Activated CD4-positive, alpha-beta T cell treated with anti-CD3 and anti-CD28 coated beads for 36 hours (primary cell): ENCODE measurements at regions of chr12 and their contacts with region 1.

Region 1: GRCh38 chr12:22409377-22410164 is 75.1 kb upstream of the ST8SIA1 start:
- DNase-seq: peak; percentile 62
- ATAC-seq: peak; percentile 89
- H3K4me3 Mint-ChIP-seq: peak overlapping the region; percentile 26
- H3K27ac Mint-ChIP-seq: peak overlapping the region; percentile 33
- H3K4me1 Mint-ChIP-seq: peaks cover 16% of the 10 kb centered on the region
- H3K27me3 Mint-ChIP-seq: no peaks in the 10 kb centered on the region

Region 2: DNA sequence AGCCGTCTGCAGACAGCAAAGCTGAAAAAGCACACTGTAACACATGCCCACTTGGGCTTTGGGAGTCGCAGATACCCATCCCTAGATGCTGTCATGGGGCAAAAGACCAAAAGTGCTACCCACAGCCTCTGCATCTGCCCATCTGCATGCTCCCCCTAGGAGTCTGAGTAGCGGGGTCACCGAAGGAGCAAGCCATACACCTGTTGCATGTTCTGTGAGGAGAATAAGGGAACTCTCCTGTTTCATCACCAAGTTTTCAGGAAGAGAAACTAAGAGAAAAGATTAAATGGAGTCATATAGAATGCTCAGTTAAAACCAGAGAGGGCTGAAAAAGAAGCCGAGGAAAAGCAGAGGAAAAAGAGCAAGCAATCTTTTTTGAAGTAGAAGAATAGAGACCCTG is 61.4 kb before region 1 on chr12:
- CTCF ChIA-PET with region 1: no interaction called
- POLR2A ChIA-PET with region 1: no interaction called
- intact Hi-C with region 1: no loop called
- DNase-seq: no peak
- ATAC-seq: no peak
- H3K4me3 Mint-ChIP-seq: no peak overlapping the region
- H3K27ac Mint-ChIP-seq: no peak overlapping the region
- H3K4me1 Mint-ChIP-seq: no peaks in the 10 kb centered on the region
- H3K27me3 Mint-ChIP-seq: no peaks in the 10 kb centered on the region

Region 3: GRCh38 chr12:22396253-22396652 is 13.3 kb before region 1 on chr12:
- CTCF ChIA-PET with region 1: no interaction called
- POLR2A ChIA-PET with region 1: no interaction called
- intact Hi-C with region 1: loop called in 1 of 2 experiments (anchors 1 kb)
- DNase-seq: no peak
- ATAC-seq: peak; percentile 43
- H3K4me3 Mint-ChIP-seq: peak overlapping the region; percentile 46
- H3K27ac Mint-ChIP-seq: peak overlapping the region; percentile 77
- H3K4me1 Mint-ChIP-seq: peaks cover 39% of the 10 kb centered on the region
- H3K27me3 Mint-ChIP-seq: no peaks in the 10 kb centered on the region